IMR-90 (cell line): ENCODE measurements at regions of chr3 and their contacts with region 1.

Region 1: DNA sequence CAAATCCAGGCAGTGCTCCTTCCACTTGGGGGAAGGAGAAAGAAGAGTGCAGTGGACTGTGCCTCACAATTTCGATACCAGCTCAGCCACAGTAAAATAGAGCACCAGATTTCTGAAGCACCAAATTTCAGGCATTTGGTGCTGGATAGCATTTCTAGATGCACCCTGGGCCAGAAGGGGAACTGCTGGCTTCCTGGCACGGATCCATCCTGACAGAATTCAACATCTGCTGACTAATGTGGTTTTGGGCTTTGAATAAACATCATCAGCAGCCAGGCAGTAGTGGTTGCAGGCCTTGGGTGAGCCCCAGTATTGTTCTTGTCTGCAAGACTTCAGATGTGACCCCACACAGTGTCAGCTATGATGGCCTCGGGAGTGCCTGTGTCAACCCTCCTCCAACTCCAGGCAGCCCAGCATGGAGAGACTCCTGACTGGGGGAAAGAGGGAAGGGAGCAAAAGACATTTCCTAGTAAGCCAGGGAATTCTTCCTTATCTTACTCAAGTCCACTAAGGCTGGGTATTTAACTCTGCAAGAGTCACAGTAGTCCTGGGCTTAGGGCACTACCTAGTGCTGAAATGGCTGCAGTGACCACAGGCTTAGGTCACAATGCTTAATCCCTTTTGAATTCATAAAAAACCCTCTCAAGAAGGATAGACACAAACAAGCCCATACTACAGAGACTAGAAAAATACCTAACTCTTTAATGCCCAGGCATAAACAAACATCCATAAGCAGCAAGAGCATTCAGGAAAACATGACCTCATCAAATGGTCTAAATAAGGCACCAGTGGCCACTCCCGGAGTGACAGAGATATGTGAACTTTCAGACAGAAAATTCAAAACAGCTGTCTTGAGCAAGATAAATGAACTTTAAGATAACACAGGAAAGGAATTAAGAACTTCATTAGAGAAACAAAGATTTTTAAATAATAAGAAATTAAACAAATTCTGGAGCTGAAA is 74.7 kb downstream of the SPATA16 start:
- DNase-seq: peak; percentile 11
- ATAC-seq: no peak
- H3K4me3 ChIP-seq: no peak overlapping the region
- H3K27ac ChIP-seq: no peak overlapping the region
- H3K4me1 ChIP-seq: peaks cover 2% of the 10 kb centered on the region; the same call in 1 of the 2 replicates
- H3K27me3 ChIP-seq: no peaks in the 10 kb centered on the region
- CTCF ChIP-seq: no peak
- POLR2A ChIP-seq: no peak
- RAD21 ChIP-seq: no peak

Region 2: GRCh38 chr3:172915911-172916514 is 150.3 kb before region 1 on chr3:
- CTCF ChIA-PET with region 1: interaction called, 16 read pairs
- POLR2A ChIA-PET with region 1: no interaction called
- dilution Hi-C with region 1: no loop called
- in situ Hi-C with region 1: no loop called
- intact Hi-C with region 1: no loop called
- DNase-seq: no peak
- ATAC-seq: no peak
- H3K4me3 ChIP-seq: no peak overlapping the region
- H3K27ac ChIP-seq: no peak overlapping the region
- H3K4me1 ChIP-seq: no peaks in the 10 kb centered on the region
- H3K27me3 ChIP-seq: no peaks in the 10 kb centered on the region
- CTCF ChIP-seq: no peak
- POLR2A ChIP-seq: no peak
- RAD21 ChIP-seq: no peak